ENCODE measurements at regions of chr22 and their contacts with region 1.

Region 1: DNA sequence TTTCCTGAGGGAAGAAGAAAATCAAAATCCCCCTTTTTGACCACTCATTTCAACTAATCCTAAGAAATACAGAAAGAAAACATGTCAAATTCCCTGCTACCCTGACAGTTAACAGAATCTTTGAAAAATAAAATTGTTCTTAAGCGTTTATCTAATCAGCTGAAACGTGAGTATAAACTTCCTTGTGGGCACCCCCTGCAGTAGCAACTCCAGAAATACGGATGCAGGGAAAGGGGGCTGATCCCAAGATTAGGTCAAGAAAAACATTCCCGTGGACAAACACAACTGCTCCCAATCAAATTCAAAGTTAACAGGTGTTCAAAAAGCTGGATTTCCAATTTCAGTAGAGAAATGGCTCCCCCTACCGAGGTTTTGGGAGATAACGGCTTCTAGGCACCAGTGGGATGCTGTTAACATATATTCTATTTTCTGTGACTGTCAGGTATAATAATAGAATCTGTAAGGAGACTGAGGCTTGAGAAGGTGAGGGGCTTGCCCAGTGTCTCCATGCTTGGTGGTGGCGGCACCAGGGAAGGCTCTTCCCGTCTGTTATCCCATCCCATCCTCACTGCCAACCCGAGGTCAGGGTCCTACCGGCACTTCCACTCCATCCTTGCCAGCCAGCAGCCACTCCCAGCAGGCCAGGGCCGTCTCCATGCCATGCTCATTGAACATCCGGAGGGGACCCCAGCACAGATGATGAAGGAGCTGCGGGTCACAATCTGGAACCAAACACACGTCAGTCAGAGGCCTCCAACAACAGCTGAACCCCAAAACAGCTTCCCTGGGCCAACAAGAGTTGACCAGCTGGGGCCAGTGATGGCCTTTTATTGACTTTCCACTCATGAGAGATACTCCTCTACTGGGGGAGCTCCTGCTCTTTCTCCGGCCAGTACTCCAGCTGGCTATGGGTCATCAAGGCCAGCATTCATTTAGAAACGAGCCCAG is 32.0 kb upstream of the SERPIND1 start:
- DNase-seq: peak; percentile 87 to 93 (median 90)
- ATAC-seq: peak; percentile 78
- H3K4me3 ChIP-seq: no peak overlapping the region
- H3K27ac ChIP-seq: no peak overlapping the region
- H3K4me1 ChIP-seq: no peaks in the 10 kb centered on the region
- H3K27me3 ChIP-seq: no peaks in the 10 kb centered on the region
- CTCF ChIP-seq: peak; percentile 94 to 100 (median 99)
- EP300 ChIP-seq: no peak
- POLR2A ChIP-seq: no peak
- RAD21 ChIP-seq: peak; percentile 54 to 86

Region 2: DNA sequence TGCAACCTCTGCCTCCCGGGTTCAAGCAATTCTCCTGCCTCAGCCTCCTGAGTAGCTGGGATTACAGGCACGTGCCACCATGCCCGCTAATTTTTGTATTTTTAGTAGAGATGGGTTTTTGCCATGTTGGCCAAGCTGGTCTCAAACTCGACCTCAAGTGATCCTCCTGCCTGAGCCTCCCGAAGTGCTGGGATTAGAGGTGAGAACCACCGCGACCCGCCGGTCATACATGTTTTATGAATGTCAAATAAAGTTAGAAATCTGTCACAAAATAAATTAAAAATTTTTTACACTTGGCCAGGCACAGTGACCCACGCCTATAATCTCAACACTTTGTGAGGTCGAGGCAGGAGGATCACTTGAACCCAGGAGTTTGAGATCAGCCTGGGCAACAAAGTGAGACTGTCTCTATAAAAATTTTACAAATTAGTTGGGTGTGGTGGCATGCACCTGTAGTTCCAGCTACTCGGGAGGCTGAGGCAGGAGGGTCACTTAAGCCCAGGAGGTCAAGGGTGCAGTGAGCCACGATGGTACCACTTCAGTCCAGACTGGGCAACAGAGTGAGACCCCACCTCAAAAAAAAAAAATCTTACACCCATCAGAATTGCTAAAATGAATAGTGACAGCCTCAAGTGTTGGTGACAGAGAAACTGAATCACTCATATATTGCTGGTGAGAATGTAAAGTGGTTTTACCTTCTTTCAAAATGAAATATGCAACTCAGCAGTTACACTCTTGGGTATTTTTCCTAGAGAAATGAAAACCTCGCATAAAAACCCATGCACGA is 179.3 kb before region 1 on chr22:
- CTCF ChIA-PET with region 1: interaction called, 24 read pairs
- POLR2A ChIA-PET with region 1: interaction called, 3 read pairs
- in situ Hi-C with region 1: no loop called
- intact Hi-C with region 1: loop called (anchors 5 kb)
- DNase-seq: no peak
- ATAC-seq: no peak
- H3K4me3 ChIP-seq: no peak overlapping the region
- H3K27ac ChIP-seq: no peak overlapping the region
- H3K4me1 ChIP-seq: peaks cover 3 to 12% of the 10 kb centered on the region in 2 experiments; a peak in 4 of 5 replicates
- H3K27me3 ChIP-seq: no peaks in the 10 kb centered on the region
- CTCF ChIP-seq: no peak
- EP300 ChIP-seq: no peak
- POLR2A ChIP-seq: no peak
- RAD21 ChIP-seq: no peak

Region 3: GRCh38 chr22:20606041-20606783 is 135.7 kb before region 1 on chr22:
- CTCF ChIA-PET with region 1: interaction called, 28 read pairs
- POLR2A ChIA-PET with region 1: no interaction called
- in situ Hi-C with region 1: no loop called
- intact Hi-C with region 1: loop called (anchors 2 kb)
- DNase-seq: peak; percentile 92 to 97 (median 95)
- ATAC-seq: peak; percentile 83
- H3K4me3 ChIP-seq: no peak overlapping the region
- H3K27ac ChIP-seq: no peak overlapping the region
- H3K4me1 ChIP-seq: peaks cover 0 to 45% of the 10 kb centered on the region in 2 experiments; a peak in 2 of 5 replicates
- H3K27me3 ChIP-seq: peaks cover 58 to 99% of the 10 kb centered on the region in 2 experiments; a peak in 4 of 5 replicates
- CTCF ChIP-seq: peak; percentile 98 to 100 (median 99)
- EP300 ChIP-seq: peak; percentile 51
- POLR2A ChIP-seq: no peak
- RAD21 ChIP-seq: peak; percentile 96 to 100; a peak in 3 of 4 replicates

Measured in K562 (cell line).